Activated T-helper 2 cell treated with anti-CD3 and anti-CD28 coated beads, Interferon-gamma antibody, Interleukin-2, Interleukin-4, amounts not matched to agents 10 μg/mL and 5 μg/mL and 100 μg/mL, durations not matched to agents 14 hours and 24 hours and 36 hours (primary cell): ENCODE measurements at regions of chr2 and their contacts with region 1.

Region 1: DNA sequence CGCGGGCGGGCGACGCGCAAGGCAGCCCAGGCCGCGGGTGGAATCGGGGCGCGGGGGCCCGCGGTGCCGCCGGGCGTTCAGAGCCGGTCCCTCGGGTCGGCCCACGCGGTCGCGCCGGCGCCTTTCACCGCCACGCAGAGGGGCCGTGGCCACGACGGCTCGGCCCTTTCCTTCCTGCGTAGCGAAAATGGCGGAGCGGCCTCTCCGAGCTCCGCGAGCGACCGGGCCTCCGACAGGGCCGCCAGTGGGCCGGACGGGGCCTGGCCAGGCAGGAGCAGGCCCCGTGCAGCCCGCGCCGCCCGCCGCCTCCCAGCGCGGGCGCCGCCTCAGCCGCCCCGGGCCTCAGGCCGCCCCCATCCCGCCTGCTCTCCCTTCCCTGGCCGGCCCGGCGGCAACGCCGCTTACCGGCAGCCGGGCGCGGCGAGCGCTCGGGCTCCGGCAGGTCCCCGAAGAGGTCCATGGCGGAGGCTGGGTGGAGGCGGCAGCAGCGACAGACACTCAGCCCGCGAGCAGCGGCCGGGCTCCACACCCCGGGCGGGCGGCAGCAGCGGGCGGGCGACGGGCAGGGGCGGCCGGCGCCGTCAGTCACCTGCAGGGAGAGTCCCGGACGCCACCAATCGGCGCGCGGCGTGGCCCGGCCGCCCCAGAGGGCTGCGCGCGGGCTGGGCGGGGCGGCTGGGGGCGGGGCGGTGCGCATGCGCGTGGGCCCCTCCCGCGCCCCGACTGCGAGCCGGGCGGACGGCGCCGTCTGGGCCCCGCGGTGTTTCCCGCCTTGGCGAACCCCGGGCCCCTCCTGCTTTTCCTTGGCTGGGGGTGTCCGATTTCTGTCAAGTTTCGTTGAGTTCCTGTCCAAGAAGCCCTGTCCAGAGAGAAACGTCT is at the start of gene ILKAP:
- DNase-seq: peak; percentile 85
- H3K4me3 Mint-ChIP-seq: peak within 1 kb of the TSS; percentile 84
- H3K27ac Mint-ChIP-seq: peak within 1 kb of the TSS; percentile 81
- H3K4me1 Mint-ChIP-seq: peaks cover 26% of the 10 kb centered on the region
- H3K27me3 Mint-ChIP-seq: no peaks in the 10 kb centered on the region
- total RNA-seq, gene ILKAP: 67.1 and 71.3 TPM in 2 replicates

Region 2: DNA sequence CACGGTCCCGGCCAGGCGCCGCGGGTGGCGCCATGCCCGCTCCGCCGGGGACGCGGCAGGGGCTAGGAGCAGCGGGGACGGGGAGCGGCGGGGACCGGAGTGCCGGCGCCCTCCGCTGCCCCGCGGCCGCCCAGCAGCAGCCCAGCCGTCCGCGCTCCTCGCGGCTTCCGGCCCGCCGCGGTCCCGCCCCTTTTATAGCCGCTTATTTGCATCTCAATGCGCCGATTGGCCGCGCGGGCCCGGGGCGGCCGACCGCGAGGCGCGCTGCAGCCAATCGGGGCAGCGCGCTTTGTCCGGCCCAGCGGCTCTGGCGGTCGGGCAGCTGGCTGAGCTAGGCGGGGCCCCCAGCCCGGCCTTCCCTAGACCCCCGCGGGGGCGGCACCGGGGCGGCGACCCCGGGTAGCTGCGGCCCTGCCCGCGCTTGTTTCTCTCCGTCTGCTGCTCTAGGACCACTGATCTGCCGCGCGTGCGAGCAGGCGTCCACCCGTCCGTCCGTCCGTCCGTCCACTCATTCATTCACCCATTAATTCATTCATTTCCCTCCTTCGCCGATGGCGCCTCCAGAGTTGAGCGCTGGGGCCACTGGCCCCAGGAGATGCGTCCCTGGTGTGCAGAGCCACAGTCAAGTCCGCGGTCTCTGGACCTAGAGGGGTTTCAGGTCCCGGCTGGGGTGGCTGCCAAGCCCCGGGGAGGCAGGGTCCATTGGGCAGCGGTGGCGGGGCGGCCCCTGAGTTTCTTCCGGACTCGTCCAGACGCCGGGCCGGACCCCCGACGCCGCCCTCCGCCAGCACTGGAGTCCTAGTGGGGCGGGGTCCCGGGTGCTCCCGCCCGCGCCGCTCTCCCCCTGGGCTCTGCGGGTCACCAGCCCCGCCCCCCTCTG is 36.8 kb after region 1 on chr2 and contains the start of gene HES6:
- intact Hi-C with region 1: loop called (anchors 2 kb)
- DNase-seq: peak; percentile 80
- H3K4me3 Mint-ChIP-seq: peak within 1 kb of the TSS; percentile 90
- H3K27ac Mint-ChIP-seq: peak within 1 kb of the TSS; percentile 70
- H3K4me1 Mint-ChIP-seq: peaks cover 3% of the 10 kb centered on the region
- H3K27me3 Mint-ChIP-seq: peaks cover 40% of the 10 kb centered on the region
- total RNA-seq, gene HES6: 10.2 and 10.8 TPM in 2 replicates